Caco-2 (cell line): ENCODE measurements at regions of chr19 and their contacts with region 1.

Region 1: GRCh38 chr19:6925801-6926751 is 38.7 kb downstream of the ADGRE1 start:
- DNase-seq: no peak
- H3K4me3 ChIP-seq: no peak overlapping the region
- H3K4me3 Mint-ChIP-seq: no peak overlapping the region
- H3K27ac Mint-ChIP-seq: no peak overlapping the region
- H3K4me1 ChIP-seq: no peaks in the 10 kb centered on the region
- H3K4me1 Mint-ChIP-seq: no peaks in the 10 kb centered on the region
- H3K27me3 ChIP-seq: no peaks in the 10 kb centered on the region
- H3K27me3 Mint-ChIP-seq: no peaks in the 10 kb centered on the region
- CTCF ChIP-seq: no peak

Region 2: DNA sequence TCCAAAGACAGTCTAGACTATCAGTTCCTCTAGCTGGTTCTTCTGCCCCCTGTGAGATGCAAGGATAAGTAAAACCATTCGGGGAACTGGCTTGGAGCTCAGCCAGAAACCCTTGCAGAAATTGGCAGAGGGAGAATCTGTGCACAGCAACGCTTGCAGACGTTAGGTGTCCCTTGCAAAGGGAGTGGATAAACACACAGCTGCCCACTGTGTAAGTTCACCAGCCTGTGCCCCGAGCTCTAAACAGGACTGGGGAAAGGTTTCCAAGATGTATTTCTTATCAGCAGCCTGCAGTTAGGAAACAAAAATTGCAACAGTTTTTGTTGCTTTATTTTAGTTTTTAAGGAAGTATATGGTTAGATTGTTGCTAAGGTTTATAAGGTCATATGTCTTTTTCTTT is 57.7 kb before region 1 on chr19:
- CTCF ChIA-PET with region 1: no interaction called
- POLR2A ChIA-PET with region 1: no interaction called
- intact Hi-C with region 1: loop called (anchors 2 kb)
- DNase-seq: no peak
- H3K4me3 ChIP-seq: no peak overlapping the region
- H3K4me3 Mint-ChIP-seq: no peak overlapping the region
- H3K27ac Mint-ChIP-seq: no peak overlapping the region
- H3K4me1 ChIP-seq: no peaks in the 10 kb centered on the region
- H3K4me1 Mint-ChIP-seq: no peaks in the 10 kb centered on the region
- H3K27me3 ChIP-seq: no peaks in the 10 kb centered on the region
- H3K27me3 Mint-ChIP-seq: peaks cover 5% of the 10 kb centered on the region
- CTCF ChIP-seq: no peak

Region 3: GRCh38 chr19:7177926-7178325 is 251.8 kb after region 1 on chr19:
- CTCF ChIA-PET with region 1: no interaction called
- POLR2A ChIA-PET with region 1: no interaction called
- intact Hi-C with region 1: no loop called
- DNase-seq: no peak
- H3K4me3 ChIP-seq: no peak overlapping the region
- H3K4me3 Mint-ChIP-seq: no peak overlapping the region
- H3K27ac Mint-ChIP-seq: no peak overlapping the region
- H3K4me1 ChIP-seq: no peaks in the 10 kb centered on the region
- H3K4me1 Mint-ChIP-seq: no peaks in the 10 kb centered on the region
- H3K27me3 ChIP-seq: no peaks in the 10 kb centered on the region
- H3K27me3 Mint-ChIP-seq: no peaks in the 10 kb centered on the region
- CTCF ChIP-seq: no peak